ENCODE measurements at regions of chr4 and their contacts with region 1.

Region 1: DNA sequence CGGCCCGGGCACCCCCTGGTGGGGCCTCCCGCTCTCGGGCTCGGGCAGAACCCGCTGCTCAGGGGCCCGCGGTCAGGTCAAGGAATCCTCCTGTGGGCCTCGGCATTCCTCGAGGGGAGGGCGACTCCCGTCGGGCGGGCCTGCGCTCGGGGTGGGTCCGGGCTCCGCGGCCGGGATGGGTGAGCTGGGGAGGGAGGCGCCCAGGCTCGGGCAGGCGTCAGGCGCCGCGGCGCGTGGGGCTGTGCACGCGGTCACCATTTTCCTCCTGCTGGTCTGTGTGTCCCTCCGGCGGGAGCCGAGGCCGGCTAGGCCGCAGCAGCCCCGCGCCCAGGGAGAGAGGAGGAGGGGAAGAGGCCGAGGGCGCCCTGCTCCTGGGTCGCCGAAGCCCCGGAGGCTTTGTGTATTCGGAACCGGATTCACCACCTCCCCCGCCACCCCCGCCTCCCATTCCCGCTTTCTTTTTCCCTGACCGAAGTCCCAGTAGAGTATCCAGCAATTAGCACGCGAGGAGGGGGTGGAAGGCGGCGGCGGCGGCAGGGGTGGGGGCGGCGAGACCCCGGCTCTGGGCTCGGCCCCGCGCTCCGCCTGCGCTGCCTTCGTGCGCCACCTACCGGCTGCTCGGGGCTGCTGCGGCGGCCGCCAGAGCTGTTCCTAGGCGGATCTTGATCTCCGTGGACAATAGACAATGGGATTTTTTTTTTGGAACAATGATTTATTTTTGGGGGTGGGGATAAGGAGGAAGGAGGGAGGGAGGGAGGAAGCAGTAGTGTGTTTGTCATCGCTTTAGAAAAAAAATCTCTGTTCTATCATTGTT is 99.0 kb upstream of the MAML3 start:
- DNase-seq: peak; percentile 82
- ATAC-seq: peak; percentile 94 to 95
- H3K4me3 ChIP-seq: peak overlapping the region; percentile 75
- H3K27ac ChIP-seq: peak overlapping the region; percentile 93
- H3K4me1 ChIP-seq: peaks cover 24% of the 10 kb centered on the region
- H3K27me3 ChIP-seq: no peaks in the 10 kb centered on the region
- CTCF ChIP-seq: peak; percentile 93

Region 2: DNA sequence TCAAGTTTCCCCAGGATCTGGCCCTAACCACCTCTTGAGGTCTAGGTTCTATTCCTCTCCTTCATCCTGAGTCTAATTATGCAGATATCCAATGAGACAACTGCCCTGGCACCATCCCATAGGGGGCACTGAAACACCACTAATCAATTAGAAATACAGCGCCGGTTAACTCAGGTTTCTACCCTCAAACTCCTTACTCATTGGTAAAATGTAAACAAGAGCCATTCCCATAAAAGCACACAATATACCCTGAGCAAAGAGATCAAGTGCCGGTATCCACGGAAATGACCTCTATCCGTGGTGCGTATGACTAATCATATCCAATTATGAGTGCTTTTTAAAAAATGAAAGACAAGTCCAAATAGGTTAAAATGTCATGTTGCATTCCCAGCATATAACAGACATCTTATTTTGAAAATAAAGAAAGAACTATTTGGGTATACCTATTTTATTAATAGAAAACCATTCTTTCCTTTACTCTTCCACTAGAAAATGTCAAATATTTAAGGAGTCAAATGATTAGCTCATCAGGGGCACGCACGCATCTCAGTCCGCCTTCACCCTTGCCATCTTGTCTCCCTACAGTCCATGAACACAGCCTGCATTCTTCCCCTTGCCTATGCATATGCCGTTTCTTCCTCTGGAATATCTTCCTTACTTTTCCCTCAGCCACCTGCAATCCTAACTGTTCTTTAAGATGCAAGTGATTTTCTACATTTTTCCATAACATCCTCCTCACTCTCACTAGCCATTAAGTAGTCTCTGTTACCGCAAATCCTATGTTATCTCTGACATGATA is 240.1 kb before region 1 on chr4:
- intact Hi-C with region 1: loop called (anchors 10 kb)
- DNase-seq: peak; percentile 54
- ATAC-seq: peak; percentile 94 to 96
- H3K4me3 ChIP-seq: no peak overlapping the region
- H3K27ac ChIP-seq: no peak overlapping the region
- H3K4me1 ChIP-seq: peaks cover 11% of the 10 kb centered on the region
- H3K27me3 ChIP-seq: no peaks in the 10 kb centered on the region
- CTCF ChIP-seq: peak; percentile 67

Measured in lower lobe of right lung (tissue), 2 donors.